GM10248 (cell line): ENCODE measurements at regions of chr7 and their contacts with region 1.

Region 1: GRCh38 chr7:90708841-90709317 is 112.8 kb downstream of the CDK14 start:
- DNase-seq: peak; percentile 45
- CTCF ChIP-seq: peak; percentile 67

Region 2: GRCh38 chr7:90645784-90646183 is 63.1 kb before region 1 on chr7:
- CTCF ChIA-PET with region 1: no interaction called
- POLR2A ChIA-PET with region 1: no interaction called
- DNase-seq: no peak
- CTCF ChIP-seq: no peak

Region 3: DNA sequence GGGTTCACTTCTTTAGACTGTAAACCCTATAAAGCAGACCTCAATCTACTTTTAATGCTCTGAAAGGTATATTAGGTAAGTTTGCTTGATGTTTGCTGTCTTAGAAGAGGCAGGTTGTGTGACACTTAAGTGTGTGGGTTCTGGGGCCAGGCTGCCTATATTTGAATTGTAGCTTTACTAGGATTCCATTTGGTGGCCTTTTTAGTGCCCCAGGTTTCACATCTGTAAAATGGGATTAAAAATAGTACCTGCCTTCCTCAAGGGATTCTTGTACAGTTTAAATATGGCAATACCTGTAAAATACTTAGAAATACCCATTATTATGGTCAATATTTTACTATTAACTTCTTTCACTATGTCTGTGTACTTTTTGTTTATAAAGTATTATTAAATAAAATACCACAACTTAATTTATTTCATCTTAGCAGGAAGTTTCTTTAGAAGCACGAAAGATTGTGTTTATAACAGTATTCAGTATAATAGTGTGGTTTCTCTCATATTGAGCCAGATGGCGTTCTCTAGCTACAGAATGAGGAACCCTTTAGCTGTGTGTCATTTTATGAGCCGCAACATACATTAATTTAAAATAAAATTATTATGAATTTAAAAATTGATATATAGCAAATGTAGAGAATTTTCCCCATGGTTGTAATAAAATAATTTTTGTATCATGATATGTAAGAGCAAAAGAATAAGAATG is 18.6 kb before region 1 on chr7:
- CTCF ChIA-PET with region 1: interaction called, 19 read pairs
- POLR2A ChIA-PET with region 1: no interaction called
- DNase-seq: no peak
- CTCF ChIP-seq: no peak

Region 4: GRCh38 chr7:90720984-90721760 is 12.3 kb after region 1 on chr7:
- CTCF ChIA-PET with region 1: interaction called, 72 read pairs
- POLR2A ChIA-PET with region 1: no interaction called
- DNase-seq: no peak
- CTCF ChIP-seq: no peak

Region 5: DNA sequence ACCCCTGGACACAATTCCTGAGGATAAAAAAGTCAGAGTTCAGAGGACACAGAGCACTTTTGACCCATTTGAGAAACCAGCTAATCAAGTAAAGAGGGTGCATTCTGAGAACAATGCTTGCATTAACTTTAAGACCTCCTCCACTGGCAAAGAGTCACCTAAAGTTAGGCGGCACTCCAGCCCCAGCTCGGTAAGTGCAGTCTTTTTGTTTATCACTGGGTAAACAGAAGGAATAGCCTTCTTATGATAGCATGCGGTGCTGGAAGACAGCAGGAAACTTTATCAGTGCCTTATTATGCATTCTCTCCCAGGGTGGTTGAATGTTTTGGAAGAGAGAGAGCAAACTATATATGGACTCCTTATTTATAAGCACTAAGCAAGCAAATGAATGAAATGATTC is 17.7 kb after region 1 on chr7:
- CTCF ChIA-PET with region 1: interaction called, 72 read pairs
- POLR2A ChIA-PET with region 1: no interaction called
- DNase-seq: no peak
- CTCF ChIP-seq: no peak

Region 6: DNA sequence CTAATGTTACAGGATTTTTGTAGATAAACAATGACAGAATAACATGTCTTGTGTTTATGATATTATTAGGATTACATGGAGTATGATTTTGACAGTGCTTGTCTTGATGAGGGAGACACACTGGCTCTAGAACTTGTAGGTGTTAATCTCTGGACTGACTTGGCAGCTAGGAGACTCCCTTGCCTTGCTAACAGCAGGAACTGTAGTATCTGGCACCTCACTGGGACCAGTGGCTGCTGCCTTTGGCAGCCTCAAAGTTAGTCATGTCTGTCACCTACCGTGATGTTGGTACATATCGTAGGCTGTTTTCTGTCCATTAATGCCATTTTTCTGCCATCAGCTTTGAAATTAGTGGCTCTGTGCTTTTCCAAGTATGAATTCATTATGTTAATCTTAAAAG is 148.7 kb after region 1 on chr7:
- CTCF ChIA-PET with region 1: interaction called, 10 read pairs
- POLR2A ChIA-PET with region 1: no interaction called
- DNase-seq: no peak
- CTCF ChIP-seq: no peak

Region 7: DNA sequence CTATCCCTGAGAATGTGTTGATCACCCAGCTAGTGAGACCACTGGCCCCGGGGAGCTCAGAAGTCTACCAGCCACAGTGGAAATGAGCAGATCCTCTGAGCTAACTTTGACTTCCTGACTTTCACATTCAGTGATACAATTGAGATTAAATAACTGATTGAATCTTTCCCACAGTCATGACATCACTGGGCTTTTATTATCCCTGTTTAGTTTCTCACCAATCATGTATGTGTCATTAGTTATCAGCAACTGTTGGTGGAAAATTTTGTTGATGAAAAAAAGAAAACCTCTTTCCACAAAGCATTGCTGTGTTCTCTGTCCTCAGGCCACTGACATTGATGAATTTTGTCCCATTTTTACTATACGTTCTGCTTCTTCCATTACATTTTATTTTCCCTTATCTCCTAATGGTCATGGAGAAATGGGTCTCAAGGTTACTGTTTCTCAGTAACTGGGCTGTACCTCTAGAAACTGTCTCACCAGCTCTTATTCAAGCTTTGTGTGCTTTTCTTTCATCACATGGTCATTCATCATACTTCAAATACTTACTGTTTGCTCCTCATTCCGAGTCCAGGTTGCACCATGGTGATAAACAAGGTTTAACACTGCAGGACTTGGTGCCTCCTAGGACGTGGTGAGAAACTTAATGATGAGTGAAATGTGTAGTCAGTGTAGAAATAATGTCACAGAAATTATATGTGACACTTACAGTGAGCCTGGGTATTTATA is 191.9 kb after region 1 on chr7:
- CTCF ChIA-PET with region 1: no interaction called
- POLR2A ChIA-PET with region 1: no interaction called
- DNase-seq: no peak
- CTCF ChIP-seq: no peak